MCF 10A (cell line): ENCODE measurements at regions of chr14 and their contacts with region 1.

Region 1: GRCh38 chr14:46344327-46344937 is 307.1 kb downstream of the RPL10L start:
- DNase-seq: peak; percentile 55
- H3K4me3 Mint-ChIP-seq: no peak overlapping the region
- H3K27ac Mint-ChIP-seq: no peak overlapping the region
- H3K4me1 Mint-ChIP-seq: no peaks in the 10 kb centered on the region
- H3K27me3 Mint-ChIP-seq: peaks cover 60% of the 10 kb centered on the region
- CTCF ChIP-seq: peak; percentile 60

Region 2: GRCh38 chr14:45610318-45610717 is 734.1 kb before region 1 on chr14:
- CTCF ChIA-PET with region 1: interaction called, 4 read pairs
- POLR2A ChIA-PET with region 1: no interaction called
- intact Hi-C with region 1: loop called (anchors 1 kb)
- DNase-seq: peak; percentile 35
- H3K4me3 Mint-ChIP-seq: no peak overlapping the region
- H3K27ac Mint-ChIP-seq: no peak overlapping the region
- H3K4me1 Mint-ChIP-seq: no peaks in the 10 kb centered on the region
- H3K27me3 Mint-ChIP-seq: no peaks in the 10 kb centered on the region
- CTCF ChIP-seq: peak; percentile 38

Region 3: DNA sequence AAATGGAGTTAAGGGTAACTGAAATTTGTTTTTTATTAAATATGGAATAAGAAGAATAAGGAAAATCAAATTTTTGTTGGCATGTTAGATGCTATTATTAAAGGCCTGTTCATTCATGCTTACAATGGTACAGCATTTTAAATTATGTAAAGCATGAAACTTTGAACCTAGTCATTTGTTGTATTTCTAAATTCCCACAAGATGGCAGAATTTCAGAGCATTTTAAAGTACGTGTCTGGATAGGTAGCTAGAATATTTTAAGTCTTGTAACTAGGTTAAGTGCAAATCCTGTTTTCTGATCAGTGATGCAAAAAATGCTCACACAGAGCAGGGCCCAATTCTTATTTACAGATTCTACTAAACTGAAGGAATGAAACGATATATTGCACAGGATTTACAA is 505.8 kb before region 1 on chr14:
- CTCF ChIA-PET with region 1: no interaction called
- POLR2A ChIA-PET with region 1: no interaction called
- intact Hi-C with region 1: loop called (anchors 1 kb)
- DNase-seq: peak; percentile 34
- H3K4me3 Mint-ChIP-seq: no peak overlapping the region
- H3K27ac Mint-ChIP-seq: no peak overlapping the region
- H3K4me1 Mint-ChIP-seq: no peaks in the 10 kb centered on the region
- H3K27me3 Mint-ChIP-seq: no peaks in the 10 kb centered on the region
- CTCF ChIP-seq: no peak

Region 4: GRCh38 chr14:46048127-46048526 is 296.3 kb before region 1 on chr14:
- CTCF ChIA-PET with region 1: no interaction called
- POLR2A ChIA-PET with region 1: no interaction called
- intact Hi-C with region 1: loop called (anchors 1 kb)
- DNase-seq: peak; percentile 61
- H3K4me3 Mint-ChIP-seq: no peak overlapping the region
- H3K27ac Mint-ChIP-seq: no peak overlapping the region
- H3K4me1 Mint-ChIP-seq: no peaks in the 10 kb centered on the region
- H3K27me3 Mint-ChIP-seq: peaks cover 55% of the 10 kb centered on the region
- CTCF ChIP-seq: no peak

Region 5: DNA sequence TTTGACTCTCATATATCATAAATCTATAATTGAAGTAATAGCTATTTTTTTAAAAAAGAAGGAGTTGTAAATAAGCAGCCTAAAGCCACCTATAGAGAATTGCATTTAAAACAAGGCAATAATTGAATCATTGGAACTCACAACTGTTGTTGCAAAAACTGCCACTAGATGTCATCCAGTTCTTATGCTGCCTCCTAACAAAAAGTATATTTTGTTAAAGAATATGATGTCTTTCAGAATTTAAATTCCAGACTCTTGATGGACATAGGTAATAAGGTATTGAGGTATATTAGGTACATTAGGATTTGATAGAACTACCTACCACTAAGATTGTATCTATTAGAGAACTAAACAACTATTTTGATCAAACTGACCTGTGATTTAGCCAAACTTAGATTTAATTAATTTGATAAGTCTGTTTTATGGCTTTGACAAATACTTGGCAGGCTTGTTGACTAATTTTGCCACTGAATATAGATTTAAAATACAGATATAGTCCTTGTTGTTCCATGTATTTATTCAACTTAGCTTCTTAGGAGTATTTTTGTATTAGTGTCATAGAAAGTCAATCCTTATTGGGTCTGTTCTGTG is 94.2 kb before region 1 on chr14:
- CTCF ChIA-PET with region 1: interaction called, 4 read pairs
- POLR2A ChIA-PET with region 1: no interaction called
- intact Hi-C with region 1: loop called (anchors 1 kb)
- DNase-seq: peak; percentile 45
- H3K4me3 Mint-ChIP-seq: no peak overlapping the region
- H3K27ac Mint-ChIP-seq: no peak overlapping the region
- H3K4me1 Mint-ChIP-seq: no peaks in the 10 kb centered on the region
- H3K27me3 Mint-ChIP-seq: peaks cover 23% of the 10 kb centered on the region
- CTCF ChIP-seq: peak; percentile 59

Region 6: DNA sequence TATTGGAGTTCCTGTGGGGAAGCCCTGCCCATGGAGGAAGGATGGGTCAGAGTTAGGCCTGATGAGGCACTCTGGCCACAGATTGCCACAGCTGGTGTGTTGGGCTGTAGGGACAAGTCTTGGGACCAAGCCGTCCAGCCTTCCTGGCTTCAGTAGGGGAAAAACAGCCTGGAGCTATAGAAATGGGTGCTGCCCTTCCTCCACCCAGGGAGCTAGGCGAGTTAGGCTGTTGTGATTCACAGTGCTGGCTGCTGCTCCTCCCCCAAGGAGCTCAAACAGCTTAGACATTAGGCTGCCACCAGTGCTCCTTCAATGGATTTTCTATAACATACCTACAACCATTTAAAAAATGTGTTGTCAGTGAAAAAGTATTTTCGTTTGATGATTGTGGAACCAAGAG is 32.9 kb after region 1 on chr14:
- CTCF ChIA-PET with region 1: no interaction called
- POLR2A ChIA-PET with region 1: no interaction called
- intact Hi-C with region 1: no loop called
- DNase-seq: no peak
- H3K4me3 Mint-ChIP-seq: no peak overlapping the region
- H3K27ac Mint-ChIP-seq: no peak overlapping the region
- H3K4me1 Mint-ChIP-seq: no peaks in the 10 kb centered on the region
- H3K27me3 Mint-ChIP-seq: no peaks in the 10 kb centered on the region
- CTCF ChIP-seq: no peak

Region 7: GRCh38 chr14:46404865-46405811 is 60.7 kb after region 1 on chr14:
- CTCF ChIA-PET with region 1: no interaction called
- POLR2A ChIA-PET with region 1: no interaction called
- intact Hi-C with region 1: no loop called
- DNase-seq: no peak
- H3K4me3 Mint-ChIP-seq: no peak overlapping the region
- H3K27ac Mint-ChIP-seq: no peak overlapping the region
- H3K4me1 Mint-ChIP-seq: no peaks in the 10 kb centered on the region
- H3K27me3 Mint-ChIP-seq: peaks cover 31% of the 10 kb centered on the region
- CTCF ChIP-seq: no peak